Activated T-helper 2 cell treated with anti-CD3 and anti-CD28 coated beads, Interferon-gamma antibody, Interleukin-2, Interleukin-4, amounts not matched to agents 10 μg/mL and 5 μg/mL and 100 μg/mL, durations not matched to agents 14 hours and 24 hours and 36 hours (primary cell): ENCODE measurements at regions of chr9 and their contacts with region 1.

Region 1: DNA sequence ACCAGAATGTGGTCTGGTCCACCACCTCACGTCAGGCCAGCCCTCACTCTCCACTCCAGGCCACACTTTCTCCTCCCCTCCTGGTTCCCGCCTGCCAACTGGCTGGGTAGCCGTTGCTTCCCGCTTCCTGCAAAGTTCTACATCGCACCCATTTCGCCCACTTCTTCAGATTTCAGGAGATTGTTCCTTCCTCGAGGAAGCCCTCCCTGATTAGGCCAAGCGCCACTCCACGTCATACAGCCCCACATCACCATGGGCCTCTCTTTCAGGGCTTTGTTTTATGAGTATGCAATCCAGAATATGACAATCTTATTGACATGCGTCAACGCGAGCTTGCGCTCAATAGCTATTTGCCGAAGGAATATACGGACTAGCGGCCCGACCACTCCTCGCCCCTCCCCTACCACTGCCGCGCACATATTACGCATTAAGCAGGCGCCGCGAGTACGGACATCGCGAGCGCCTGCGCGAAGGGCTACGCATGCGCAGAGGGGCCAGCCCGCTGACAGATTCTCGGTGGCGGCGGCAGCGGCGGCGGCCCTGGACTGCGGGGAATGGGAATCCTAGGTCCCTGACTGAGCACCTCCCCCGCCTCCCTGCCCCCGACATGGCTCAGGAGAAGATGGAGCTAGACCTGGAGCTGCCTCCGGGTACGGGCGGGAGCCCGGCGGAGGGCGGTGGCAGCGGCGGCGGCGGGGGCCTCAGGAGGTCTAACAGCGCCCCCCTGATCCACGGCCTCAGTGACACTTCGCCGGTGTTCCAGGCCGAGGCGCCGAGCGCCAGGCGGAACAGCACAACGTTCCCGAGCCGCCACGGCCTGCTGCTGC is 74.7 kb downstream of the PIP5K1B start:
- DNase-seq: peak; percentile 91
- H3K4me3 Mint-ChIP-seq: no peak overlapping the region
- H3K27ac Mint-ChIP-seq: no peak overlapping the region
- H3K4me1 Mint-ChIP-seq: peaks cover 17% of the 10 kb centered on the region
- H3K27me3 Mint-ChIP-seq: no peaks in the 10 kb centered on the region

Region 2: DNA sequence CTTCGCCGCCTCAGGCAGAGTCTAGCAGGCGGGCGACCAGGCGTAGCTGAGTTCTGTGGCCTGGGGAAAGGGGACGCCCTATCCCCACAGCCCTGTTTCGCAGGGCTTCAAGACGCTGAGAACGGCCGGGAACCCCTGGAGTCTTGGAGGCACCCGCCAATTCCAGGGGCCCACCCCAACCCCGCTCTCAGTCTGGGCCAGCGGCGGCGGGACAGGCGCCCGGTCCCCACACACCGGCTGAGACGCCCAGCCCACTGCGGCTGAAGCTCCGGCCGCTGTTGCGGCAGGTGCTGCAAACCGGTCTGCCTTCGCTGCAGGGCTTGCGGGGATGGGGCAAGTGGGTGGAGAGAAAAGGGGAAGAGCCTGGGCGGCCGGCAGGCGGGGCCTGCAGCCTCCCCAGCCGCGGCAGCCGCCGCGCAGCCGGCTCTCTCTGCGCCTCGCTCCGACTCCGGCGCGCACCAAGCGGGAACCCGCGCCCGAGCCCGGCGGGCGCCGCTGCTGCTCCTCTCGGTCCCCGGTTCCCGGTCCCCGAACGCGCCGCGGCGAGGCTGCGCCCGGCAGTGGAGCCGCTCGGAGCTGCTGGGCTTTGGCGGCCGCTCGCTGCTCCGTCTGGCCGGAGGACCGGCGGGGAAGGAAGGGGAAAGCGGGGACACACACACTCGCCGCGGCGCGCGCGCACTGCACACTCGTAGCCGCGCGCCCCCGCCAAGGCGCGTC is 74.8 kb before region 1 on chr9 and contains the start of gene PIP5K1B:
- intact Hi-C with region 1: loop called (anchors 2 kb)
- DNase-seq: peak; percentile 69
- H3K4me3 Mint-ChIP-seq: peak within 1 kb of the TSS; percentile 88
- H3K27ac Mint-ChIP-seq: peak within 1 kb of the TSS; percentile 67
- H3K4me1 Mint-ChIP-seq: peaks cover 54% of the 10 kb centered on the region
- H3K27me3 Mint-ChIP-seq: peaks cover 36% of the 10 kb centered on the region
- total RNA-seq, gene PIP5K1B: 76.2 and 77.2 TPM in 2 replicates

Region 3: DNA sequence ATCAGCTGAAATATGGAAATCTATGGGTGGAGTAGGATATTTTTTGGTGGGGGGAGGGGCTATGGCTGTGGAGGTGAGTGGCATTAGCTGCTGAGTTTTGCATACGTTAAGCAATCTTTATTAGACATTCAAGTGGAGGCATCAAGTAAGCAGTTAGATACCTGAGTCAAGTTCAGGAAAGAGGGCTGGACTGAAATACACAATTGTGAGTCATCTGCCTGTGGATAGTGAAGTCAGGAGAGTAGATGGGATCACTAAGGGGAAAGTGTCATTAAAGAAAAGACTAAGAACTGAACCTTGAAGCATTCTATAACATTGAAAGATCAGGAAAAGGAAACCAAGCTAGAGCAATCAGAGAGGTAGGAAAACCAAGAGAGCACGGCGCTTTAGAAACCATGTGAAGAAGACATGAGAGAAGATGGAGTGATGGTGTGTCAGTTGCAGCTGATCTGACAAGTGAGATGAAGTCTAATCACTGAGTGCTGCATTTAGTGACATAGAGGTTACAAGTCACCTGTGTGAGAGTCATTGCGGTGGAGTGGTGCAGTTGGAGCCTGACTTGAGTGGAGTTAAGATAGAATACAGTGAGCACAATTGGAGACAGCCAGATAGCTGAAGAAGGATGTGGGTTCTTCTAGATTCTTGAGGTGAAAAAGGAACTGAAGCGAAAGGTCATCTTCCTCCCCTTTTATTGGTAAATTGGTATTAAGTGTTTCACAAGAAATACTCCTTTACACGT is 14.0 kb after region 1 on chr9:
- intact Hi-C with region 1: loop called (anchors 1 kb)
- DNase-seq: peak; percentile 33
- H3K4me3 Mint-ChIP-seq: no peak overlapping the region
- H3K27ac Mint-ChIP-seq: no peak overlapping the region
- H3K4me1 Mint-ChIP-seq: peaks cover 25% of the 10 kb centered on the region
- H3K27me3 Mint-ChIP-seq: no peaks in the 10 kb centered on the region

Region 4: GRCh38 chr9:68822596-68823165 is 42.9 kb after region 1 on chr9:
- intact Hi-C with region 1: no loop called
- DNase-seq: no peak
- H3K4me3 Mint-ChIP-seq: no peak overlapping the region
- H3K27ac Mint-ChIP-seq: no peak overlapping the region
- H3K4me1 Mint-ChIP-seq: peaks cover 5% of the 10 kb centered on the region
- H3K27me3 Mint-ChIP-seq: peaks cover 2% of the 10 kb centered on the region

Region 5: GRCh38 chr9:68851657-68852056 is 71.9 kb after region 1 on chr9:
- intact Hi-C with region 1: no loop called
- DNase-seq: no peak
- H3K4me3 Mint-ChIP-seq: no peak overlapping the region
- H3K27ac Mint-ChIP-seq: no peak overlapping the region
- H3K4me1 Mint-ChIP-seq: peaks cover 16% of the 10 kb centered on the region
- H3K27me3 Mint-ChIP-seq: no peaks in the 10 kb centered on the region

Region 6: GRCh38 chr9:69131682-69132081 is 351.9 kb after region 1 on chr9:
- intact Hi-C with region 1: no loop called
- DNase-seq: no peak
- H3K4me3 Mint-ChIP-seq: no peak overlapping the region
- H3K27ac Mint-ChIP-seq: no peak overlapping the region
- H3K4me1 Mint-ChIP-seq: no peaks in the 10 kb centered on the region
- H3K27me3 Mint-ChIP-seq: no peaks in the 10 kb centered on the region